ENCODE measurements at regions of chr7 and their contacts with region 1.

Region 1: DNA sequence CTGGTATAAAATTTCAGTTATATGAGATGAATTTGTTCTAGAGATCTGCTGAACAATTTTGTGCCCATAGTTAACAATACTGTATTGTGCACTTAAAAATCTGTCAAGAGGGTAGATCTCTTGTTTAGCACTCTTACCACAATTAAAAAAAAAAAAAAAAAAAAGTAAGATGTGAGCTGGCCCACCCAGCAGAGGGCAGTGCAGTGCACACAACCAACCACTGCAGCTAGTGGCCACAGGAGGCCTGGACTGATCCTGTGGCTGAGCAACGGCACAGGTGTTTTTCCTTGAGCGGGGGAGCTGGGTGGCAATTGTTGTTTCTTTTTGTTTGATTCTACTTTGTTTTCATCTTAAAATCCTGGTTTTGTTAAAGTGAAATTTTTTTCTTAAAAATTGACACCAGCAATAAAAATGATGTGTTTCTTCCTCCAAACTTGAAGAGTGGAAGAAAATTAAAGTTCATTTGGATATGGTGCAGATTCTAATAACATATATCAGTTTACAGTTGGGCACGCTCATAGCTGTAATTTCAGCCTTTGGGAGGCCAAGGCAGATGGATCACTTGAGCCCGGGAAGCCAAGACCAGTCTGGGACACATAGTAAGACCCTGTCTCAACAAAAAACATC is 171.1 kb upstream of the TBX20 start:
- DNase-seq: no peak

Region 2: DNA sequence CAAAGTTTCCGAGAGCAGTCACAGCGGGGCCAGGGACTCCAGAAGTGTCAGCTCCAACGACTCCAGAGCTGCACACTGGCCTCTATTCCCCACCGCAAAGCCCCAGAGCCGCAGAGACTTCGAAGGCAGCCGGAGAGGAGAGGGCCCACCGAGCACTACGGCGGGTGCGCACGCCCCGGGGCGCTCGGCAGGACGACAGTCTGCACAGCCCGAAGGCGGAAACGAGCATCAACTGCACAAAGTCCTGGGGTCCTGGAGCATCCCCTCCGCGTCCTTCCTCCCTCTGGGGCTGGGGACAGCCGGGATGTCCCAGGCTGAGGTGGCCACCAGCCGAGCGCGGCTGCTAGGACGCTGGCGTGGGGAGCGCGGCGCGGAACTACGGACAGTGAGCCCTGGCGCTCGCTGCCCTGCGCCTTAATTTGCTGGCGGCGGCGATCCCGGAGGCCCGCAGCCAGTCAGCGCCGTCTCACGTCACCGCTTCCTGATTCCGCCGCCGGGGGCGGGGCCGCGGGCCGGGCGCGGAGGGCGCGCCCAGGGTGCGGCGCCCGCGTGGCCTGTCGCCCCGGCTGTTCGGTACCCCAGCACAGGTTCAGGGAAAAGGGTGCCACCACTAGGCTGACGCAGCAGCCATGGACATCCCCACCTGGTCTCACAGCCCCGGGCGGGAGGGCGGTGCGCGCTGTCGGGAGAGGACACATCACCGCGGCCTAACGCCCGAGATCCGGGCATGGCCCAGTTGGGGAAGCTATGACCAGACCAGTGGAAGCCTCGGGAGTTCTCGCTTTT is 171.1 kb before region 1 on chr7 and contains the start of gene TBX20:
- intact Hi-C with region 1: loop called (anchors 5 kb)
- DNase-seq: no peak
- total RNA-seq, gene TBX20: 58.0 TPM

Region 3: GRCh38 chr7:35519971-35520809 is 95.2 kb after region 1 on chr7:
- intact Hi-C with region 1: loop called (anchors 2 kb)
- DNase-seq: peak; percentile 84

Region 4: GRCh38 chr7:35537067-35538023 is 112.4 kb after region 1 on chr7:
- intact Hi-C with region 1: loop called (anchors 5 kb)
- DNase-seq: peak; percentile 85

Region 5: DNA sequence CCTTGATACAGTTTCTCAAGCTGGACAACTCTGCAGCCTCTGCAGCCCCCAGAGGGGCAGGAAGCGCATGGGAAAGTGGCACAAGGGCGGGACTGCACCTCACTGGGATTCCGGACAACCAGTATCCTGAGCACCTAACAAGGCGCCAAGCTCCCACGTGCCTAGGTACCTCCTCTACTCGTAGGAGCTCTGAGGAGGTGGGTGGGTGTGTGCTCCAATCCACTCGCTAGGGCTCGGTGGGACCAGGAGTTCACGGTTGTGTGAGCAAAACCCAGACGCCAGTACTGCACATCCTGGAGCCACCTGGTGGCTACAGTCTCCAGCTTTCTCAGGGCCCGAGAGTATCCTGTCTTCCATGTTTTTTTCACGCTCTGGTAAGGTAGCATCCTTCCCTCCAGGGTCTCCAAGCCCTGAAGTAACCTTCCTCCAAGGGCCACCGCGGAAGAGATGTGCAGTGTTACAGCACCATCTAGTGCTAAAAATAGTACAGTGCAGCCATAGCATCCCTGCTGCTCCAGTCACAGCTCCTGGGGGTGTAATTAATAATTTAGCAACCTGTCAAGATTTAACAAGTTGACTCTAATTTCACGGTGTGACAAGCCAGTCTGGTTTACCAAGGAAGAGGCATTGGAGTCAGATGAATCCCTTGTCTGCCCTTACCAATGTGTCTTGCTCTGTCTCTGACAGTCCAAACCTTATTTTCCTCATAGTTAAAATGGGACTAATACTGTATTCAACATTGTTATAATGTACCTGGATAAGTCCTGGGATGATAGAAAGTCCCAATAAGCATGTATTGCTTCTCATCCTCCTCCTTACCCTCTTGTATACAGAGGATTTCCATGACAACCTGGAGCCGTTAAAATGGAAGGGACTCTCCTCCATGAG is 199.6 kb after region 1 on chr7:
- intact Hi-C with region 1: loop called (anchors 10 kb)
- DNase-seq: no peak

Measured in cardiac septum (tissue), 1 donor.